G401 (cell line): ENCODE measurements at regions of chr15 and their contacts with region 1.

Region 1: GRCh38 chr15:50576166-50576565 is 29.7 kb upstream of the USP50 start:
- DNase-seq: no peak

Region 2: DNA sequence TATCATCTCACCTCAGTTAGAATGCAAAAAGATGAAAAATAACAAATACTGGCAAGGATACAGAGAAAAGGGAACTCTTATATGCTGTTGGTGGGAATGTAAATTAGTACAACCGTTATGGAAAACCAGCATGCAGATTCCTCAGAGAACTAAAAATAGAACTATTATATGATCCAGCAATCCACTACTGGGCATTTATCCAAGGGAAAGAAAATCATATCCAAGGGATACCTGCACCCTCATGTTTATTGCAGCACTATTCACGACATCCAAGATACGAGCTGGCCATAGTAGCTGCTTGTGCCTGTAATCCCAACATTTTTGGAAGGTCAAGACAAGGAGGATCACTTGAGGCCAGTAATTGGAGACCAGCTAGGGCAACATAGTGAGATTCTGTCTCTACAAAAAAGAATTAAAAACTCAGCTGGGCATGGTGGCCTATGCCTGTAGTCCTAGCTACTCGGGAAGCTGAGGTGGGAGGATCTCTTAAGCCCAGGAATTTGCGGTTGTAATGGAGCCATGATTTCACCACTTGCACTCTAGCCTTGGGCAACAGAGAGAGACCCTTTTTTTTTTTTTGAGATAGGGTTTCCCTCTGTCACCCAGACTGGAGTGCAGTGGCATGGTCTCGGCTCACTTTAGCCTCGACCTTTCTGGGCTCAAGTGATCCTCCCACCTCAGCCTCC is 56.3 kb before region 1 on chr15:
- in situ Hi-C with region 1: no loop called
- DNase-seq: no peak

Region 3: DNA sequence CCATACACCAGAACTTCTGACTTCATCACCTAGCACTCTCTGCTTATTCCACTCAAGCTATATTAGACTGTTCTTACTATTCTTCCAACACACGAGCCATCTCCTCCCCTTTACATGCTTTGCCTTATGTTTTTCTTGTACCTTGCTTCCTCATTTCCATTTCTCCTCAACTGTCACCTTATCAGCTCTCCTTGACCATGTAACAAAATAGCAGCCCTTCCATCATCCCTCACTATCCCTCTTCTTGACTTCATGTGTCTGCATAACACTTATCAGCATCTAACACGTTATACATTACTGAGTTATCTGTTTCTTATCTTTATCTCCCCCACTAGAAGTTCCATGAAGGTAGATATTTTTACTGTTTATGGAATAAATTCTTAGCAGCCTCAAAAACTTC is 65.1 kb after region 1 on chr15:
- in situ Hi-C with region 1: loop called (anchors 10 kb)
- DNase-seq: no peak